CD8-positive, alpha-beta T cell (primary cell): ENCODE measurements at regions of chr2 and their contacts with region 1.

Region 1: DNA sequence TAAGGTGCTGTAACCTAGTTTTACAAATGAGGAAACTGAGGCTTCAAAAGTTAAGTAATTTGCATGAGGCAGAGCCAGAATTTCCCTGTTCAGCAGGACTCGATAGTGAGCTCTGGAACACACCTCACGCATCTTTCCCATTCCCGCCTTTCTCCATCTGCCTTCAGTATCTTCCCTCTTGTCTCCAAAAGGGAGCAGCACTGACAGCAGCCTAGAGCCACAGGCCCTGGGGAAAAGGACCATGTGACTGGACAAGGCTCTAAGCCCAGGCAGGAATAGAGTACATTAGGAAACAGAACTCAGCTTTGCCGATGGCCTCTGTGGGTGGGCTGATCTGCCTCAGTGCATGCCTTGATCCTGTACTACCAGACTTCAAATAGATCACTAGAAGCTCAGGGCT is 21.5 kb downstream of the GPR155 start:
- DNase-seq: no peak
- ATAC-seq: no peak
- H3K4me3 ChIP-seq: no peak overlapping the region
- H3K4me3 Mint-ChIP-seq: no peak overlapping the region
- H3K27ac ChIP-seq: no peak overlapping the region
- H3K27ac Mint-ChIP-seq: no peak overlapping the region
- H3K4me1 ChIP-seq: no peaks in the 10 kb centered on the region
- H3K4me1 Mint-ChIP-seq: peaks cover 1% of the 10 kb centered on the region
- H3K27me3 ChIP-seq: no peaks in the 10 kb centered on the region
- H3K27me3 Mint-ChIP-seq: no peaks in the 10 kb centered on the region
- CTCF ChIP-seq: no peak

Region 2: GRCh38 chr2:174492963-174493431 is 27.7 kb after region 1 on chr2:
- CTCF ChIA-PET with region 1: interaction called, 34 read pairs
- POLR2A ChIA-PET with region 1: interaction called, 7 read pairs
- intact Hi-C with region 1: loop called in 1 of 2 experiments (anchors 2 kb)
- DNase-seq: peak; percentile 34 to 94 (median 64)
- ATAC-seq: peak; percentile 85
- H3K4me3 ChIP-seq: peak overlapping the region; percentile 27 to 47
- H3K4me3 Mint-ChIP-seq: peak overlapping the region; percentile 85
- H3K27ac ChIP-seq: peak overlapping the region; percentile 71 to 88
- H3K27ac Mint-ChIP-seq: peak overlapping the region; percentile 97
- H3K4me1 ChIP-seq: peaks cover 71% of the 10 kb centered on the region
- H3K4me1 Mint-ChIP-seq: peaks cover 83% of the 10 kb centered on the region
- H3K27me3 ChIP-seq: no peaks in the 10 kb centered on the region
- H3K27me3 Mint-ChIP-seq: no peaks in the 10 kb centered on the region
- CTCF ChIP-seq: no peak

Region 3: GRCh38 chr2:174522553-174522952 is 57.2 kb after region 1 on chr2:
- CTCF ChIA-PET with region 1: interaction called, 89 read pairs
- POLR2A ChIA-PET with region 1: interaction called, 7 read pairs
- intact Hi-C with region 1: loop called (anchors 1 kb)
- DNase-seq: peak in 2 of 9 experiments; percentile 32 to 44
- ATAC-seq: no peak
- H3K4me3 ChIP-seq: no peak overlapping the region
- H3K4me3 Mint-ChIP-seq: no peak overlapping the region
- H3K27ac ChIP-seq: no peak overlapping the region
- H3K27ac Mint-ChIP-seq: no peak overlapping the region
- H3K4me1 ChIP-seq: no peaks in the 10 kb centered on the region
- H3K4me1 Mint-ChIP-seq: peaks cover 18% of the 10 kb centered on the region
- H3K27me3 ChIP-seq: no peaks in the 10 kb centered on the region
- H3K27me3 Mint-ChIP-seq: no peaks in the 10 kb centered on the region
- CTCF ChIP-seq: no peak

Region 4: DNA sequence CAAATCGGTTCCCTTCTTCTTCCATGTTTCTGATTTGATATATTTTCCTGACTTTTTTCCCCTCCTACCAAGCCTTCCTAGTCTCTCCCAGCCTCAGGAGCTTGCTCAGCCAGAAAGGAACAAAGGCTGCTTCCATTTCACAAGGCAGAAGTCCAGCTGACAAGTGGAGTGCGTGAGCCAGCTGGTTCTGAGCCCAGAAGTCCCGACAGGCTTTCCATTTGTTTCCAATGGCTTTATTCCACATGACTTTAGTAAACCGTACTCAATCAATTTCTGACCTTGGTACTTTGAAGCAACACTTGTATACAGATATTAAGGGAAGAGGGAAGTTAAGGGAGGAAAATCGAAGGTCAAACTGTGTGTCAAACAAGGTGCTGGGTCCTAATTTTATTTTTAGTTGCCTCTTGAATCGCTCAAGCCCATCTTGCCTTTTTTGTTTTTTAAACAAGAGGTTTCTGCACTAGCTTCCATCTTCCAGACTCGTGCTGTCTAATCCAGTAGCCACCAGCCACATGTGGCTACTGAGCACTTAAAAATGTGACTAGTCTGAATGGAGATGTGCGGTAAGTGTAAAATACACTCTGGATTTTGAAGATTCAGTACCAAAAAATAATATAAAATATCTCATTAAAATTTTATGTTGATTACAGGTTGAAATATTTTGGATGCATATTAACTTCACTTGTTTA is 96.1 kb after region 1 on chr2:
- CTCF ChIA-PET with region 1: interaction called, 21 read pairs
- POLR2A ChIA-PET with region 1: no interaction called
- intact Hi-C with region 1: loop called in 1 of 2 experiments (anchors 5 kb)
- DNase-seq: no peak
- ATAC-seq: no peak
- H3K4me3 ChIP-seq: no peak overlapping the region
- H3K4me3 Mint-ChIP-seq: no peak overlapping the region
- H3K27ac ChIP-seq: peak overlapping the region in 1 of 2 experiments; percentile 34
- H3K27ac Mint-ChIP-seq: peak overlapping the region; percentile 81
- H3K4me1 ChIP-seq: no peaks in the 10 kb centered on the region
- H3K4me1 Mint-ChIP-seq: peaks cover 7% of the 10 kb centered on the region
- H3K27me3 ChIP-seq: no peaks in the 10 kb centered on the region
- H3K27me3 Mint-ChIP-seq: no peaks in the 10 kb centered on the region
- CTCF ChIP-seq: no peak

Region 5: GRCh38 chr2:174593574-174594203 is 128.4 kb after region 1 on chr2:
- CTCF ChIA-PET with region 1: interaction called, 18 read pairs
- POLR2A ChIA-PET with region 1: interaction called, 3 read pairs
- intact Hi-C with region 1: no loop called
- DNase-seq: peak; percentile 34 to 95 (median 71)
- ATAC-seq: peak; percentile 67
- H3K4me3 ChIP-seq: peak overlapping the region; percentile 40 to 74
- H3K4me3 Mint-ChIP-seq: peak overlapping the region; percentile 87
- H3K27ac ChIP-seq: peak overlapping the region; percentile 65 to 91
- H3K27ac Mint-ChIP-seq: peak overlapping the region; percentile 99
- H3K4me1 ChIP-seq: peaks cover 46% of the 10 kb centered on the region
- H3K4me1 Mint-ChIP-seq: peaks cover 61% of the 10 kb centered on the region
- H3K27me3 ChIP-seq: no peaks in the 10 kb centered on the region
- H3K27me3 Mint-ChIP-seq: no peaks in the 10 kb centered on the region
- CTCF ChIP-seq: no peak

Region 6: DNA sequence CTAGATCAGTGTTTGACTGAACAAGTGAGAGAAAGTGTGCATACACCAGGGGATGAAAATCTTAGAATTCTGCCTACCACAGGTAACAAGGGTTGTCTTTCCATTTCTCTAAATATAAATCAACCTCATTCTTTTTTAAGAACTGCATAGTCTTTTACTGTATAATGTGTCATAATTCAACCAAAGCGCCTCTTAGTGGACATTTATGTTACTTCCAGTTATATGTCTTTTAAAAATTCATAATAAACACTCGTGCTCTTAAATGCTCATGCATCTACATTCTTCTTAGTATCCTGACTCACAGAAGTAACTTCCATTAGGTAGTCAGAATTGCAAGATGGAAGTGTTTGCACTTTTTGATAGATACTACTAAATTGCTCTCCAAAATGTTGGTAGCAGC is 222.8 kb after region 1 on chr2:
- CTCF ChIA-PET with region 1: interaction called, 107 read pairs
- POLR2A ChIA-PET with region 1: no interaction called
- intact Hi-C with region 1: loop called (anchors 1 kb)
- DNase-seq: peak in 2 of 9 experiments; percentile 58 to 70
- ATAC-seq: peak; percentile 67
- H3K4me3 ChIP-seq: no peak overlapping the region
- H3K4me3 Mint-ChIP-seq: no peak overlapping the region
- H3K27ac ChIP-seq: no peak overlapping the region
- H3K27ac Mint-ChIP-seq: peak overlapping the region; percentile 68
- H3K4me1 ChIP-seq: peaks cover 11% of the 10 kb centered on the region
- H3K4me1 Mint-ChIP-seq: peaks cover 24% of the 10 kb centered on the region
- H3K27me3 ChIP-seq: no peaks in the 10 kb centered on the region
- H3K27me3 Mint-ChIP-seq: no peaks in the 10 kb centered on the region
- CTCF ChIP-seq: peak; percentile 73